BJ (cell line): ENCODE measurements at regions of chr2 and their contacts with region 1.

Region 1: DNA sequence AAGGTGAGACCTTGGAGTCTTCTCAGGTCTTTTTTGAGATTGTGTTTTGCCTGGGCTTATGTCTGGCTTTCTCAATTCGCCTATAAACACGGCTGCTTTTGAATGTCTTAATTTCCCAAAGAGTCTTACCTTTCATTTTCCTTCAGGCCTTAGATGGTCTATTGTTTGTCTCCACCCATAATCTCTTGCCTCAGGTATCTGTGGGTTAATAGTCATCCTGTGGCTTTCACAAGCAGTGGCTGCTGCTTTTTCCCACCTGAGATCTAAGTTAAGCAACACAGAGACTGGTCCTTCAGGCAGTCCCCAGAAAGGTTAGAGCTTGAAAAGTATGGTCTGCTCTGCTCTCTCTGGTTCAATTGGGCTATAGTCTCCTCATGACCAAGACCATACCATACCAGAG is 275.3 kb downstream of the INSIG2 start:
- DNase-seq: no peak
- H3K4me3 ChIP-seq: no peak overlapping the region
- H3K27me3 ChIP-seq: no peaks in the 10 kb centered on the region
- CTCF ChIP-seq: no peak

Region 2: DNA sequence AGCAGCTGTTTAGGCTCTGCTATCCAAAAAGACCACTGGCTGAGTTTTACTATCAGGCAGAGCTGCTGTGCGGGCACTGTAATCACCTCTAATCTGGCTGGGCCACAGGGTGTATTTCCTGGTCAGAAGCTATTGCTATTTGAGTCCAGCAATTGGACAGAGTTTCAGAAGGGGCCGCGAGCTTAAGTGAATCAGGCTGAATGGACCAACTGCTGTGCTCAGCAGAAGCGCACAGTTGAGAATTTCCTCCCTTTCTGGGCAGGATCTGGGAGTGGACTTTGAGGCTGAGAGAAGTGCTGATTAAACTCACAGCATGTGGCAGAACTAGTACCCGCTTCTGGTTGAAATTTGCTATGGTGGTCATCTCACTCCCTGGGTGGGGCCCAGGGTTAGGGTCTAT is 23.5 kb before region 1 on chr2:
- CTCF ChIA-PET with region 1: no interaction called
- POLR2A ChIA-PET with region 1: no interaction called
- DNase-seq: no peak
- H3K4me3 ChIP-seq: no peak overlapping the region
- H3K27me3 ChIP-seq: no peaks in the 10 kb centered on the region; the same call in 1 of the 2 replicates
- CTCF ChIP-seq: no peak

Region 3: GRCh38 chr2:118464546-118465265 is 101.1 kb after region 1 on chr2:
- CTCF ChIA-PET with region 1: no interaction called
- POLR2A ChIA-PET with region 1: interaction called, 10 read pairs
- DNase-seq: no peak
- H3K4me3 ChIP-seq: no peak overlapping the region
- H3K27me3 ChIP-seq: no peaks in the 10 kb centered on the region
- CTCF ChIP-seq: no peak